ENCODE measurements at regions of chr1 and their contacts with region 1.

Region 1: GRCh38 chr1:32249831-32250525 is 1.1 kb upstream of the LCK start:
- DNase-seq: no peak
- H3K4me3 ChIP-seq: no peak overlapping the region
- H3K27ac ChIP-seq: peak overlapping the region in 7 of 59 donors; percentile 3 to 52 (median 17)
- H3K27me3 ChIP-seq: no peaks in the 10 kb centered on the region
- CTCF ChIP-seq: no peak

Region 2: DNA sequence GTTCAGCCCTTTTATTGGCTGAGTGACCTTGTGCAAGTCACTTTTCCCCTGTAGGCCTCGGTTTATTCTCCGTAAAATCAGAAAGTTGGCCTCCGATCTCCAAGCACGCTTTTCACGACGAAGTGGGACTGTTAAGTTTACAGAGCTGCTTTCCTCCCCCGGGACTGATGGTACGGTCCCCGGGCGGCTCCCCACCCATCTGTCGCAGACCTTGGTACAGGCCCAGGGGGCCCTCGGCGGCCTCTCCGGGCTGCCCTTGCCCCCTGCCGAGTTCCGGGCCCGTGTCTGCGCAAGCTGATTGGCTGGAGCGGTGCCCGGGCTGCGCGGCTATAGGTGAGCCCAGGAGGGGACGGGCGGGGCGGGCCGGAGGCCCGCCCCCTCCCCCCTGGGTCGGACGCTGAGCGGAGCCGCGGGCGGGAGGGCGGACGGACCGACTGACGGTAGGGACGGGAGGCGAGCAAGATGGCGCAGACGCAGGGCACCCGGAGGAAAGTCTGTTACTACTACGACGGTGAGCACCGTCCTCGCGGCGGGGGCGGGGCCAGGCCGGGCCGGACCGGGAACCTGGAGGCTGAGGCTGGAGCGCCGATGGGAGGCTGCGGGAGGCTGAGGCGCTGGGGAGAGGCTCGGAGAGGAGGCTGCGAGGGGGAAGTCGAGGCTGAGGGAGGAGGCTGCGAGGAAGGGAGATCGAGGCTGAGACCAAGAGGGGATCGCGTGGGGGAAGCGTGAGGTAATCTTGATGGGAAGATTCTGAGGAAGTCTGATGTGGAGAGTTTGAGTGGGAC is 41.9 kb after region 1 on chr1 and contains the start of gene HDAC1:
- intact Hi-C with region 1: loop called in 1 of 2 experiments (anchors 5 kb)
- DNase-seq: peak; percentile 46 to 90 (median 85)
- H3K4me3 ChIP-seq: peak within 1 kb of the TSS; percentile 45 to 95 (median 80)
- H3K27ac ChIP-seq: peak within 1 kb of the TSS in 56 of 59 donors; percentile 1 to 92 (median 74)
- H3K27me3 ChIP-seq: peaks cover 0 to 5% (median 0%) of the 10 kb centered on the region in 45 donors
- CTCF ChIP-seq: peak in 13 of 56 donors; percentile 2 to 45 (median 12)
- total RNA-seq, gene HDAC1: 16.3 to 56.0 (median 29.8) TPM

Region 3: GRCh38 chr1:32861904-32862695 is 612.1 kb after region 1 on chr1:
- intact Hi-C with region 1: no loop called
- DNase-seq: peak in 3 of 10 donors; percentile 67 to 78 (median 70)
- H3K4me3 ChIP-seq: no peak overlapping the region
- H3K27ac ChIP-seq: peak overlapping the region in 52 of 59 donors; percentile 3 to 84 (median 62)
- H3K27me3 ChIP-seq: no peaks in the 10 kb centered on the region
- CTCF ChIP-seq: no peak

Measured in dorsolateral prefrontal cortex (tissue), 120 donors.